Caco-2 (cell line): ENCODE measurements at regions of chr14 and their contacts with region 1.

Region 1: GRCh38 chr14:47917345-47917954 is 242.0 kb upstream of the MDGA2 start:
- DNase-seq: peak in 1 of 2 experiments; percentile 50
- H3K4me3 ChIP-seq: no peak overlapping the region
- H3K4me3 Mint-ChIP-seq: no peak overlapping the region
- H3K27ac Mint-ChIP-seq: no peak overlapping the region
- H3K4me1 ChIP-seq: no peaks in the 10 kb centered on the region
- H3K4me1 Mint-ChIP-seq: no peaks in the 10 kb centered on the region
- H3K27me3 ChIP-seq: no peaks in the 10 kb centered on the region
- H3K27me3 Mint-ChIP-seq: peaks cover 3% of the 10 kb centered on the region
- CTCF ChIP-seq: peak; percentile 58 to 66

Region 2: GRCh38 chr14:47874350-47874749 is 43.1 kb before region 1 on chr14:
- CTCF ChIA-PET with region 1: no interaction called
- POLR2A ChIA-PET with region 1: no interaction called
- intact Hi-C with region 1: no loop called
- DNase-seq: no peak
- H3K4me3 ChIP-seq: no peak overlapping the region
- H3K4me3 Mint-ChIP-seq: no peak overlapping the region
- H3K27ac Mint-ChIP-seq: no peak overlapping the region
- H3K4me1 ChIP-seq: no peaks in the 10 kb centered on the region
- H3K4me1 Mint-ChIP-seq: no peaks in the 10 kb centered on the region
- H3K27me3 ChIP-seq: no peaks in the 10 kb centered on the region
- H3K27me3 Mint-ChIP-seq: no peaks in the 10 kb centered on the region
- CTCF ChIP-seq: no peak

Region 3: DNA sequence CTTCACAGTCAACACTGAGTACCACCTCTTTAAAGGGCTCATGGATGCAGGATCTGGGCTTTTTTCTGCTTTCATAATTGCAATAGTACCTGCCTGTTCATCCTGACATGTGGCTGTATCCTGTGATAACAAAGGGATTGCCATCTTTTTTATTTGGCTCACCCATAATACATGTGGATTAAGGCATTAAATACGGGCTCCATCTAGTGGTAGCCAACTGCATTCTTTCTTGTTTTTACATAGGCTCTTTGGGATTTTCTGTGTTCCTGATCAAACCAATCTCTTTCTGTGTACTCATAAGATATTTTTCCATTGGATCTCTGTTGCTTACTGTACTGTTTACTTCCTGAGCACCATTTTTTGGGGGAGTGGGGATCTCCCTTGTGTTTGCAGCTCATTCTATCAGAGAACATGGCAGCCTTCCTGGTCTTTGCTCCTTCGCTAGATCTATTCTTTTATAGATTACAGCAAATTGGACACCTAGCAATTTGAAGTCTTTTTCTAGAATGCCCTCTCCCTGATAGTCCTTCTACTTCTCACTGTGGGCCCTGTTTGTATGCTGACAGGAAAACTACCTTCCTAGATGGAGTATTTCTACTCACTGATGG is 481.3 kb after region 1 on chr14:
- CTCF ChIA-PET with region 1: no interaction called
- POLR2A ChIA-PET with region 1: no interaction called
- intact Hi-C with region 1: loop called (anchors 1 kb)
- DNase-seq: peak in 1 of 2 experiments; percentile 37
- H3K4me3 ChIP-seq: no peak overlapping the region
- H3K4me3 Mint-ChIP-seq: no peak overlapping the region
- H3K27ac Mint-ChIP-seq: no peak overlapping the region
- H3K4me1 ChIP-seq: no peaks in the 10 kb centered on the region
- H3K4me1 Mint-ChIP-seq: no peaks in the 10 kb centered on the region
- H3K27me3 ChIP-seq: no peaks in the 10 kb centered on the region
- H3K27me3 Mint-ChIP-seq: no peaks in the 10 kb centered on the region
- CTCF ChIP-seq: peak; percentile 56 to 66

Region 4: GRCh38 chr14:49306152-49306751 is 1388.8 kb after region 1 on chr14:
- CTCF ChIA-PET with region 1: no interaction called
- POLR2A ChIA-PET with region 1: no interaction called
- intact Hi-C with region 1: loop called (anchors 2 kb)
- DNase-seq: peak in 1 of 2 experiments; percentile 16
- H3K4me3 ChIP-seq: no peak overlapping the region
- H3K4me3 Mint-ChIP-seq: no peak overlapping the region
- H3K27ac Mint-ChIP-seq: no peak overlapping the region
- H3K4me1 ChIP-seq: no peaks in the 10 kb centered on the region
- H3K4me1 Mint-ChIP-seq: no peaks in the 10 kb centered on the region
- H3K27me3 ChIP-seq: no peaks in the 10 kb centered on the region; the same call in 1 of the 2 replicates
- H3K27me3 Mint-ChIP-seq: peaks cover 7% of the 10 kb centered on the region
- CTCF ChIP-seq: peak; percentile 38